ENCODE measurements at regions of chr11 and their contacts with region 1.

Region 1: GRCh38 chr11:120303004-120303637 is 22.0 kb upstream of the TLCD5 start:
- DNase-seq: no peak
- H3K4me3 ChIP-seq: no peak overlapping the region
- H3K27ac ChIP-seq: no peak overlapping the region
- H3K4me1 ChIP-seq: peaks cover 0 to 3% (median 0%) of the 10 kb centered on the region in 6 donors
- H3K27me3 ChIP-seq: peaks cover 0 to 35% (median 0%) of the 10 kb centered on the region in 7 donors
- CTCF ChIP-seq: peak; percentile 63 to 94 (median 89)
- POLR2A ChIP-seq: no peak

Region 2: GRCh38 chr11:120229451-120230424 is 73.4 kb before region 1 on chr11:
- intact Hi-C with region 1: loop called (anchors 5 kb)
- DNase-seq: no peak
- H3K4me3 ChIP-seq: no peak overlapping the region
- H3K27ac ChIP-seq: peak overlapping the region in 1 of 8 donors; percentile 9
- H3K4me1 ChIP-seq: peaks cover 10 to 41% (median 27%) of the 10 kb centered on the region in 6 donors
- H3K27me3 ChIP-seq: peaks cover 0 to 30% (median 0%) of the 10 kb centered on the region in 7 donors
- CTCF ChIP-seq: peak; percentile 26 to 69 (median 52)
- POLR2A ChIP-seq: no peak

Region 3: DNA sequence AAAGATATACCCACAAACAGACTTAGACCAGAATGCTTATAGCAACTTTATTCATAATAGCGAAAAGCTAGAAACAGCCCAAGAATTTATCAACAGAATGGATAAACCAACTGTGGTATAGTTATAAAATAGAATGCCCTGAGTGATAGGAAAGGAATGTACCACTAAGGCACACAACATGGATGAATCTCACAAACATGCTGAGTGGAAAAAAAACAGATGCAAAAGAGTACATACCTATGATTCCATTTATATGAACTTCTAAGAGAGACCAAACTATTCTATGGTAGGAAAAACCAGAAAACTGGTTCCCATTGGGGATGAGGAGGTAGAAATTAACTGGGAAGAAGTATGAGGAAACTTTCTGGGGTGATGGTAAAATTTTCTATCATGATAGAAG is 168.0 kb after region 1 on chr11:
- intact Hi-C with region 1: no loop called
- DNase-seq: no peak
- H3K4me3 ChIP-seq: no peak overlapping the region
- H3K27ac ChIP-seq: no peak overlapping the region
- H3K4me1 ChIP-seq: no peaks in the 10 kb centered on the region
- H3K27me3 ChIP-seq: no peaks in the 10 kb centered on the region
- CTCF ChIP-seq: no peak
- POLR2A ChIP-seq: no peak

Measured in spleen (tissue), 13 donors.